ENCODE measurements at regions of chr6 and their contacts with region 1.

Region 1: GRCh38 chr6:127971945-127972391 is 71.1 kb upstream of the THEMIS start:
- DNase-seq: peak; percentile 67
- H3K4me3 Mint-ChIP-seq: peak overlapping the region; percentile 78
- H3K27ac Mint-ChIP-seq: peak overlapping the region; percentile 97
- H3K4me1 Mint-ChIP-seq: peaks cover 64% of the 10 kb centered on the region
- H3K27me3 Mint-ChIP-seq: no peaks in the 10 kb centered on the region

Region 2: GRCh38 chr6:127879685-127880084 is 92.3 kb before region 1 on chr6:
- CTCF ChIA-PET with region 1: interaction called, 3 read pairs
- POLR2A ChIA-PET with region 1: interaction called, 10 read pairs
- DNase-seq: no peak
- H3K4me3 Mint-ChIP-seq: peak overlapping the region; percentile 46
- H3K27ac Mint-ChIP-seq: peak overlapping the region; percentile 69
- H3K4me1 Mint-ChIP-seq: peaks cover 67% of the 10 kb centered on the region
- H3K27me3 Mint-ChIP-seq: no peaks in the 10 kb centered on the region

Region 3: GRCh38 chr6:127907960-127908640 is 63.9 kb before region 1 on chr6:
- CTCF ChIA-PET with region 1: interaction called, 6 read pairs
- POLR2A ChIA-PET with region 1: interaction called, 29 read pairs
- DNase-seq: no peak
- H3K4me3 Mint-ChIP-seq: peak overlapping the region; percentile 77
- H3K27ac Mint-ChIP-seq: peak overlapping the region; percentile 81
- H3K4me1 Mint-ChIP-seq: peaks cover 40% of the 10 kb centered on the region
- H3K27me3 Mint-ChIP-seq: no peaks in the 10 kb centered on the region

Region 4: DNA sequence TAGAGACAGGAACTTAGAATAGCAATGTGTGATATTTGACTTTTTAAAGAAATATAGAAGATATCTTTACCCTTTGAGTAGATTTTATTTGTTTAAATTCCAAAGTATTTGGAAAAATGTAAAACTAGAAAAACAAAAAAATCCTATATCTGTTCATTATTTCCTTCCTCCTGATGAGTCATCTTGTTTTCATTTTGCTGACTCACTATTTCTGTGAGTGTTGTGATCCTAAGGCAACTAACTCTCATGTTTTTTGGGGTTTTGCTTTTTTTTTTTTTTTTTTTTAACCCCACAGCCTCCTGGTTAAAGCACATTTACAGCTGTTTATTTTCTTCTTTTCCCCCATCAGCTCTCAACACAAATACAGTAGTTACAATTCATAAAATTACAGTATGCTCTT is 33.3 kb before region 1 on chr6:
- CTCF ChIA-PET with region 1: interaction called, 9 read pairs
- POLR2A ChIA-PET with region 1: interaction called, 47 read pairs
- DNase-seq: no peak
- H3K4me3 Mint-ChIP-seq: no peak overlapping the region
- H3K27ac Mint-ChIP-seq: peak overlapping the region; percentile 65
- H3K4me1 Mint-ChIP-seq: peaks cover 50% of the 10 kb centered on the region
- H3K27me3 Mint-ChIP-seq: no peaks in the 10 kb centered on the region

Measured in activated CD4-positive, alpha-beta memory T cell treated with anti-CD3 and anti-CD28 coated beads, Interleukin-2, amount 10 ng/mL, durations not matched to agents 7 days and 5 days (primary cell).